Gastrocnemius medialis (tissue), 4 donors: ENCODE measurements at regions of chr2 and their contacts with region 1.

Region 1: DNA sequence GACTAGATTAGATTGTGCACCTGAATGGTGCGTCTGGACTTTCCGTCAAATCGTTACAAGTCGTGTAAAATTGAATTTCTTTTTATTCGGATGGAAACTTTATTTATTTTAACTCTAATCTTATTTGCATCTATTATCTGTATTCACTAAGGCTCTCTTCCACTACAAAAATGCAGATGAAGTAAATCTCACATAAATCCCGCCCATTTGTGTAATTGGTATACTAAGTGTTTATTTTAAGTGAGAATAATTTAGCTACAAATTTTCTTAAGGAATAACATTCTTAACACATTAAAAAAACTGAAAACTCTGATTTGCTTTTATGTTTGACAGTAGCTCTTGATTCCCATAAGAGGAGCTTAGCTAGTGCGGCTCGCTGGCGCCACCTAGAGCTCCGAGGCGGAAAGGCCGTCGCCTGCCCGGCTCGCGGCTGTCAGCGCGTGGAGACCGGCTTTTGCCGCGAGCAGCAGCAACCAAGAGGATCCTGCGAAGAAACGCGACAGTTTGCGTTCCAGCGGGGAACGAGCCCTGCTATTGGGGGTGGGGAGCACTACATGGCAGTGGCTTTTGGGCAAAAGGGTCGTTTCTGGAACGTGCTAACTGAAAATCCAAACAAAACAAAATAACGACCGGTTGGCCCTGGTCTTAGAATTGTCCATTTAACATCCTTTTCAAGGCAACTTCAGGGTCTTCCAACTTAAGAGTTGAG is 6.7 kb downstream of the SP9 start:
- DNase-seq: peak; percentile 67 to 75
- ATAC-seq: peak; percentile 63 to 86
- H3K4me3 ChIP-seq: peak overlapping the region; percentile 21 to 49 (median 30)
- H3K27ac ChIP-seq: no peak overlapping the region
- H3K4me1 ChIP-seq: peaks cover 18 to 23% of the 10 kb centered on the region in 2 donors
- H3K27me3 ChIP-seq: peaks cover 70 to 80% (median 73%) of the 10 kb centered on the region in 3 donors
- CTCF ChIP-seq: peak; percentile 77 to 99 (median 91)
- POLR2A ChIP-seq: no peak

Region 2: GRCh38 chr2:173590271-173590861 is 751.1 kb before region 1 on chr2:
- in situ Hi-C with region 1: no loop called
- intact Hi-C with region 1: loop called (anchors 10 kb)
- DNase-seq: peak; percentile 86 to 89
- ATAC-seq: peak; percentile 91 to 98
- H3K4me3 ChIP-seq: peak overlapping the region; percentile 27 to 44 (median 40)
- H3K27ac ChIP-seq: peak overlapping the region; percentile 81 to 89 (median 88)
- H3K4me1 ChIP-seq: peaks cover 23% of the 10 kb centered on the region in 2 donors
- H3K27me3 ChIP-seq: no peaks in the 10 kb centered on the region
- CTCF ChIP-seq: no peak
- POLR2A ChIP-seq: no peak

Region 3: GRCh38 chr2:173955004-173955403 is 386.4 kb before region 1 on chr2:
- in situ Hi-C with region 1: no loop called
- intact Hi-C with region 1: loop called (anchors 10 kb)
- DNase-seq: no peak
- ATAC-seq: peak in 1 of 2 donors; percentile 58
- H3K4me3 ChIP-seq: no peak overlapping the region
- H3K27ac ChIP-seq: no peak overlapping the region
- H3K4me1 ChIP-seq: peaks cover 75 to 80% of the 10 kb centered on the region in 2 donors
- H3K27me3 ChIP-seq: no peaks in the 10 kb centered on the region
- CTCF ChIP-seq: peak in 1 of 5 experiments; percentile 32
- POLR2A ChIP-seq: no peak

Region 4: GRCh38 chr2:174158003-174158402 is 183.4 kb before region 1 on chr2:
- in situ Hi-C with region 1: loop called in 2 of 4 experiments (anchors 10 to 25 kb)
- intact Hi-C with region 1: loop called (anchors 1 kb)
- DNase-seq: no peak
- ATAC-seq: peak in 1 of 2 donors; percentile 56
- H3K4me3 ChIP-seq: no peak overlapping the region
- H3K27ac ChIP-seq: no peak overlapping the region
- H3K4me1 ChIP-seq: no peaks in the 10 kb centered on the region
- H3K27me3 ChIP-seq: no peaks in the 10 kb centered on the region
- CTCF ChIP-seq: peak; percentile 15 to 51 (median 34)
- POLR2A ChIP-seq: no peak

Region 5: GRCh38 chr2:174248187-174248997 is 93.0 kb before region 1 on chr2 and contains the start of gene OLA1:
- in situ Hi-C with region 1: no loop called
- intact Hi-C with region 1: loop called (anchors 5 kb)
- DNase-seq: peak; percentile 89 to 92
- ATAC-seq: peak; percentile 91 to 95
- H3K4me3 ChIP-seq: peak within 1 kb of the TSS; percentile 68 to 88 (median 79)
- H3K27ac ChIP-seq: peak within 1 kb of the TSS; percentile 85 to 94 (median 90)
- H3K4me1 ChIP-seq: peaks cover 5 to 14% of the 10 kb centered on the region in 2 donors
- H3K27me3 ChIP-seq: no peaks in the 10 kb centered on the region
- CTCF ChIP-seq: no peak
- POLR2A ChIP-seq: peak; percentile 80 to 84
- total RNA-seq, gene OLA1: 75.4 to 111 (median 92.8) TPM

Region 6: DNA sequence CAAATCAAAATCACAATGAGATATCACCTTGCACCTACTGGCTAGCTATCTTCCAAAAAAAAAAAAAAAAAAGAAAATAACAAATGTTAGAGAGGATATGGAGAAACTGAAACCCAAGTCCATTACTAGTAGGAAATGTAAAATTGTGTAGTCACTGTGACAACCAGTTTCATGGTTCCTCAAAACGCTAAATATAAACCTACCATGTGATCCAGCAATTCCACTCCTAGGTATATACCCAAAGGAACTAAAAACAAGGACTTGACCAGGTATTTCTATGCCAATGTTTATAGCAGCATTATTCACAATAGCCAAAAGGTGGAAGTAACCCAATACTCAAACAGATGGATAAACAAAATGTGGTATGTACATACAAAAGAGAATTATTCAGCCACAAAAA is 42.4 kb after region 1 on chr2:
- in situ Hi-C with region 1: no loop called
- intact Hi-C with region 1: no loop called
- DNase-seq: no peak
- ATAC-seq: no peak
- H3K4me3 ChIP-seq: no peak overlapping the region
- H3K27ac ChIP-seq: no peak overlapping the region
- H3K4me1 ChIP-seq: no peaks in the 10 kb centered on the region
- H3K27me3 ChIP-seq: no peaks in the 10 kb centered on the region
- CTCF ChIP-seq: no peak
- POLR2A ChIP-seq: no peak